Left lung (tissue), 14 donors: ENCODE measurements at regions of chr7 and their contacts with region 1.

Region 1: GRCh38 chr7:102270178-102270887 is 16.3 kb upstream of the SH2B2 start:
- DNase-seq: peak in 1 of 4 donors; percentile 55
- ATAC-seq: no peak
- H3K4me3 ChIP-seq: no peak overlapping the region
- H3K27ac ChIP-seq: no peak overlapping the region
- H3K4me1 ChIP-seq: peaks cover 0 to 4% of the 10 kb centered on the region in 2 donors
- H3K27me3 ChIP-seq: no peaks in the 10 kb centered on the region
- CTCF ChIP-seq: no peak

Region 2: GRCh38 chr7:101542527-101543241 is 727.6 kb before region 1 on chr7:
- intact Hi-C with region 1: loop called in 1 of 2 experiments (anchors 2 kb)
- DNase-seq: peak in 3 of 4 donors; percentile 48 to 61 (median 55)
- ATAC-seq: peak; percentile 80
- H3K4me3 ChIP-seq: no peak overlapping the region
- H3K27ac ChIP-seq: no peak overlapping the region
- H3K4me1 ChIP-seq: peaks cover 0 to 3% of the 10 kb centered on the region in 2 donors
- H3K27me3 ChIP-seq: no peaks in the 10 kb centered on the region
- CTCF ChIP-seq: peak; percentile 89 to 90